Caco-2 (cell line): ENCODE measurements at regions of chr2 and their contacts with region 1.

Region 1: DNA sequence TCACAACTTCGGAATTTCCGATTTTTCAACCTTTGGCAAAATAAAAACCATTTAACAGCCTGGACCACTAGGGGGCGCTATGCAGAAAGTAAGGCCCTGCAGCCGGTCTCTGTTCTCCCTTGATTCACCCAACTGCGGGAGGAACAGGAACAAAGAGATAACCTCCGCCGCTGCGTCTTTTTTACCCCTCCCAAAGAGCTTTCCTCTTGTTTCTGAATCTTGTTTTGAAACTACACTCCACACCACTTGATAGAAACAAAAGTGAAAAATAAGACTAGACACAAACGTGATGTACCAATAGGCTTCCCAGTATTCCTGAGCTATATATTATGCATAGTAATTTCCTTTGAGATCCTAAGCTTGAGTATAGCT is 231.2 kb downstream of the MYO3B start:
- DNase-seq: peak; percentile 74 to 83
- H3K4me3 ChIP-seq: no peak overlapping the region; the same call in 1 of the 2 replicates
- H3K4me3 Mint-ChIP-seq: peak overlapping the region; percentile 69
- H3K27ac Mint-ChIP-seq: peak overlapping the region; percentile 52
- H3K4me1 ChIP-seq: no peaks in the 10 kb centered on the region
- H3K4me1 Mint-ChIP-seq: peaks cover 6% of the 10 kb centered on the region
- H3K27me3 ChIP-seq: no peaks in the 10 kb centered on the region
- H3K27me3 Mint-ChIP-seq: no peaks in the 10 kb centered on the region
- CTCF ChIP-seq: peak; percentile 82 to 93

Region 2: DNA sequence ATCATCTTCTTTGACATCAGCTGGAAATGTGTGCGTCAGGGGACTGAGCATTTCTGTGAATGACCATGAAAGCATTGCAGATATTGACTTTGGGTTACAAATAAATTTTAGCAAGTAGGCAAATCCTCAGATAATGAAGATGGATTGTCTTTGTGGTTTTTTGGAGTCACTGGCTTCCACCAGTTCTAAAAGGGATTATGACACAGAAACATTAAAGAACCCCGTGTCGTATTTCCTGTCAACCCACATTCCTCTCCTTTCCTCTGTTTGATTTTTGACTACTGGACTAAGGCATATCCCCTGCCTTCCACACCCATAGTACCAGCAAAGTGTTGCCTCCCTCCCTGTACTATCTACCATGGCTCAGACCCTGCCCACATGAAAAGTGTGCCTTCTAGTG is 36.9 kb after region 1 on chr2:
- CTCF ChIA-PET with region 1: no interaction called
- POLR2A ChIA-PET with region 1: no interaction called
- intact Hi-C with region 1: loop called (anchors 2 kb)
- DNase-seq: peak; percentile 49 to 83
- H3K4me3 ChIP-seq: no peak overlapping the region
- H3K4me3 Mint-ChIP-seq: peak overlapping the region; percentile 23
- H3K27ac Mint-ChIP-seq: peak overlapping the region; percentile 65
- H3K4me1 ChIP-seq: peaks cover 67% of the 10 kb centered on the region
- H3K4me1 Mint-ChIP-seq: peaks cover 42% of the 10 kb centered on the region
- H3K27me3 ChIP-seq: no peaks in the 10 kb centered on the region
- H3K27me3 Mint-ChIP-seq: no peaks in the 10 kb centered on the region
- CTCF ChIP-seq: no peak

Region 3: DNA sequence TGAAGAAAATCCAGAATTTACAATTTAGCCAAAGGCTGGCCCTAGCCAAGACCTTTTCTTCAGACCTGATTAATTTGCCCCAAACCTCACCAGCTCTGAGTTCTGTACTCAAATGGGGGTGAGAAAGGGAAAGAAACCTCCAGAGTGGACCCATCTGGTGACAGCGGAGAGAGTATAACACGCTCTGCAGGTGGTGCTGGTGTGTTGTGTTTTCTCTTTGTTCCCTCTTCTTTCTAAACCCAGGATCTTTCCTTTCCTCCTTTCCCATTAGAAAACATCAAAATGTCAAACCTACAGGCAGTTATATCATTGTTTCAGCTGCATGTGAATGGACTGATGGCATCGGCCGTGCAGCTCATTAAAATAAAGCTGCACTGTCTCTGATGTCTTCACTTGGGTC is 52.7 kb after region 1 on chr2:
- CTCF ChIA-PET with region 1: interaction called, 10 read pairs
- POLR2A ChIA-PET with region 1: interaction called, 5 read pairs
- intact Hi-C with region 1: no loop called
- DNase-seq: no peak
- H3K4me3 ChIP-seq: no peak overlapping the region
- H3K4me3 Mint-ChIP-seq: no peak overlapping the region
- H3K27ac Mint-ChIP-seq: peak overlapping the region; percentile 14
- H3K4me1 ChIP-seq: peaks cover 3% of the 10 kb centered on the region
- H3K4me1 Mint-ChIP-seq: peaks cover 15% of the 10 kb centered on the region
- H3K27me3 ChIP-seq: no peaks in the 10 kb centered on the region
- H3K27me3 Mint-ChIP-seq: no peaks in the 10 kb centered on the region
- CTCF ChIP-seq: peak; percentile 19 to 25

Region 4: DNA sequence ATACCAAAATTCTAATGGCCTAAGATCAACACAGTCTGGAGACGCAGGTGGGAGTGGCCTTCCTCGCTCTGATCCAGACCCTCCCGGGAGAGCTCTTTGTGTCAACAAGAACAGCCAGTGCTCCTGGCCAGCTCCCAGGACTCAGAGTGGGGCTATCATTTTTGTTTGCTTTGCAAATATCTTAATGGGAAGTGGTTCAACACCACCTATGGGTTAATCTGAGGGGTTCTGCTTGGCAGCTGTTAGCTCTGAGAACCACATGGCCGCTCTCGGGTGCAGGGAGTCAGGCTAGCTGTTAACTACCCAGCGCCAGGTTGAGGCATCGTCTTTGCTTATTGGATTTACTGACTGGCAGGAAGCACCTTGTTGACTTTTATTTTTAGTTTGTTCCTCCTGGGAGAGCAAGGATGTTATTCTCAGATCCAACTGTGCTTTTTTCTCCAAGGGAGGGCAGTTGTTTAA is 121.2 kb after region 1 on chr2:
- CTCF ChIA-PET with region 1: interaction called, 4 read pairs
- POLR2A ChIA-PET with region 1: no interaction called
- intact Hi-C with region 1: loop called (anchors 5 kb)
- DNase-seq: peak; percentile 55 to 76
- H3K4me3 ChIP-seq: no peak overlapping the region
- H3K4me3 Mint-ChIP-seq: peak overlapping the region; percentile 58
- H3K27ac Mint-ChIP-seq: no peak overlapping the region
- H3K4me1 ChIP-seq: peaks cover 21% of the 10 kb centered on the region
- H3K4me1 Mint-ChIP-seq: peaks cover 32% of the 10 kb centered on the region
- H3K27me3 ChIP-seq: no peaks in the 10 kb centered on the region
- H3K27me3 Mint-ChIP-seq: no peaks in the 10 kb centered on the region
- CTCF ChIP-seq: peak in 1 of 2 experiments; percentile 10

Region 5: DNA sequence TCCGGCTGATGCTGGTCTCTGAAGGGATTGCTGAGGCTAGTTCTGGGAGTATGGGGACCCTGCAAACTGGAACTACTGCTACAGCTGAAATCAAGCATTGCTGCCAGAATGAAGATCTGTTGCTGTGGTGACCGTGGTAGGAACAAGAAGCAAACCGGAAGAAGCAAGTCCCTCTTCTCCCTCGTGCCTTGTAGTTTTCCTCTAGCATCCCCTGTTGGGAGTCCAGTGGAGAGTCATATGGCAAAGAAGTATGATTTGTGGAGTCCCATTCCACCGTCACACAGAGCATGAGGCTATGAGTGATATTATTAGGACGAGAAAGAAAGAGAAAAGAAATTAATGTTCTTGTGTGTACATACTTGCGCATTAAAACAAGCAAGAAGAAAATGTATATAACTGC is 167.1 kb after region 1 on chr2:
- CTCF ChIA-PET with region 1: no interaction called
- POLR2A ChIA-PET with region 1: no interaction called
- intact Hi-C with region 1: loop called (anchors 10 kb)
- DNase-seq: no peak
- H3K4me3 ChIP-seq: no peak overlapping the region
- H3K4me3 Mint-ChIP-seq: no peak overlapping the region
- H3K27ac Mint-ChIP-seq: no peak overlapping the region
- H3K4me1 ChIP-seq: peaks cover 4% of the 10 kb centered on the region; the same call in 1 of the 2 replicates
- H3K4me1 Mint-ChIP-seq: no peaks in the 10 kb centered on the region
- H3K27me3 ChIP-seq: no peaks in the 10 kb centered on the region
- H3K27me3 Mint-ChIP-seq: peaks cover 3% of the 10 kb centered on the region
- CTCF ChIP-seq: no peak